ENCODE measurements at regions of chr7 and their contacts with region 1.

Region 1: GRCh38 chr7:44847508-44847920 is 373 bp downstream of the H2AZ2 start:
- DNase-seq: peak; percentile 82
- ATAC-seq: peak; percentile 78
- H3K4me3 ChIP-seq: peak overlapping the region; percentile 90
- H3K27ac ChIP-seq: peak overlapping the region; percentile 81
- H3K4me1 ChIP-seq: peaks cover 2% of the 10 kb centered on the region; the same call in 1 of the 2 replicates
- H3K27me3 ChIP-seq: no peaks in the 10 kb centered on the region
- CTCF ChIP-seq: peak; percentile 87
- POLR2A ChIP-seq: no peak
- RAD21 ChIP-seq: peak; percentile 82

Region 2: GRCh38 chr7:44581879-44582603 is 265.5 kb before region 1 on chr7 and contains the start of gene TMED4:
- CTCF ChIA-PET with region 1: no interaction called
- POLR2A ChIA-PET with region 1: interaction called, 10 read pairs
- dilution Hi-C with region 1: no loop called
- in situ Hi-C with region 1: no loop called
- intact Hi-C with region 1: no loop called
- DNase-seq: peak; percentile 98
- ATAC-seq: peak; percentile 98
- H3K4me3 ChIP-seq: peak within 1 kb of the TSS; percentile 91
- H3K27ac ChIP-seq: peak within 1 kb of the TSS; percentile 90
- H3K4me1 ChIP-seq: peaks cover 8% of the 10 kb centered on the region
- H3K27me3 ChIP-seq: no peaks in the 10 kb centered on the region
- CTCF ChIP-seq: no peak
- POLR2A ChIP-seq: peak; percentile 73
- RAD21 ChIP-seq: no peak
- total RNA-seq, gene TMED4: 68.0 and 92.7 TPM in 2 replicates

Region 3: DNA sequence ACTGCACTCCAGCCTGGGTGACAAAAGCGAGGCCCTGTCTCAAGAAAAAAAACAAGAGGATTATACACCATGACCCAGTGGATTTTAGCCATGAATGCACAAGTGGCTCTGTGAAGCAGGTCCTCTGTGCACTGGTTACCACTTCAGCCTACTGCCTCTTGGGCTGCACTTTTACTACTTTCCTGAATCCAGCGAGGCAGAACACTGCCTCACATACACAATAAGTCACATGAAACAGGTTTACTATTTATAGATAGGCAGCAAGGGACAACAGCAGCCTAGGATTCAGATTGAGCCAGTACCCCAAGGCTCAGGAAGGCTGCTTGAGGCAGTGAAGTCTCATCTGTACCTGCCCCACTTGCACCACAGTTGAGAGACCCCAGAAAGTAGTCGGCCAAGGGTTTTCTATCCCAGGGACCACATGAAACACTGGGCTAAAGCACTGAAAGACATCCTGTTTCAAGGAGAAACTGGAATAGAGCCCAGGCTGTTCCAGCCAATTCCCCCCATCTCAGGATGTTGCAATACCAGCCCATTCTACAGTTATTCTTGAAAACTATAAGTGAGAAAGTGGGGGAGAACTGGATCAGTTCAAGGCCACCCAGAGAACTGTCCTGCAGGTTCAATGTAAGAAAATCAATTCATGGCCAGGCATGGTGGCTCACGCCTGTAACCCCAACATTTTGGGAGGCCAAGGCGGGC is 251.4 kb before region 1 on chr7:
- CTCF ChIA-PET with region 1: interaction called, 4 read pairs
- POLR2A ChIA-PET with region 1: no interaction called
- dilution Hi-C with region 1: no loop called
- in situ Hi-C with region 1: loop called (anchors 10 kb)
- intact Hi-C with region 1: no loop called
- DNase-seq: peak; percentile 16
- ATAC-seq: no peak
- H3K4me3 ChIP-seq: no peak overlapping the region
- H3K27ac ChIP-seq: no peak overlapping the region
- H3K4me1 ChIP-seq: 0 out of 2 replicates have a peak, but pooled peaks cover 2% of the 10 kb centered on the region
- H3K27me3 ChIP-seq: peaks cover 1% of the 10 kb centered on the region
- CTCF ChIP-seq: no peak
- POLR2A ChIP-seq: no peak
- RAD21 ChIP-seq: no peak

Region 4: GRCh38 chr7:44748045-44748947 is 99.2 kb before region 1 on chr7 and contains the start of gene ZMIZ2:
- CTCF ChIA-PET with region 1: no interaction called
- POLR2A ChIA-PET with region 1: no interaction called
- dilution Hi-C with region 1: no loop called
- in situ Hi-C with region 1: no loop called
- intact Hi-C with region 1: loop called (anchors 1 kb)
- DNase-seq: peak; percentile 76
- ATAC-seq: peak; percentile 98
- H3K4me3 ChIP-seq: peak within 1 kb of the TSS; percentile 99
- H3K27ac ChIP-seq: peak within 1 kb of the TSS; percentile 100
- H3K4me1 ChIP-seq: peaks cover 20% of the 10 kb centered on the region
- H3K27me3 ChIP-seq: no peaks in the 10 kb centered on the region
- CTCF ChIP-seq: no peak
- POLR2A ChIP-seq: peak; percentile 82
- RAD21 ChIP-seq: peak; percentile 20; the same call in 1 of the 2 replicates
- total RNA-seq, gene ZMIZ2: 2.8 and 3.0 TPM in 2 replicates

Region 5: DNA sequence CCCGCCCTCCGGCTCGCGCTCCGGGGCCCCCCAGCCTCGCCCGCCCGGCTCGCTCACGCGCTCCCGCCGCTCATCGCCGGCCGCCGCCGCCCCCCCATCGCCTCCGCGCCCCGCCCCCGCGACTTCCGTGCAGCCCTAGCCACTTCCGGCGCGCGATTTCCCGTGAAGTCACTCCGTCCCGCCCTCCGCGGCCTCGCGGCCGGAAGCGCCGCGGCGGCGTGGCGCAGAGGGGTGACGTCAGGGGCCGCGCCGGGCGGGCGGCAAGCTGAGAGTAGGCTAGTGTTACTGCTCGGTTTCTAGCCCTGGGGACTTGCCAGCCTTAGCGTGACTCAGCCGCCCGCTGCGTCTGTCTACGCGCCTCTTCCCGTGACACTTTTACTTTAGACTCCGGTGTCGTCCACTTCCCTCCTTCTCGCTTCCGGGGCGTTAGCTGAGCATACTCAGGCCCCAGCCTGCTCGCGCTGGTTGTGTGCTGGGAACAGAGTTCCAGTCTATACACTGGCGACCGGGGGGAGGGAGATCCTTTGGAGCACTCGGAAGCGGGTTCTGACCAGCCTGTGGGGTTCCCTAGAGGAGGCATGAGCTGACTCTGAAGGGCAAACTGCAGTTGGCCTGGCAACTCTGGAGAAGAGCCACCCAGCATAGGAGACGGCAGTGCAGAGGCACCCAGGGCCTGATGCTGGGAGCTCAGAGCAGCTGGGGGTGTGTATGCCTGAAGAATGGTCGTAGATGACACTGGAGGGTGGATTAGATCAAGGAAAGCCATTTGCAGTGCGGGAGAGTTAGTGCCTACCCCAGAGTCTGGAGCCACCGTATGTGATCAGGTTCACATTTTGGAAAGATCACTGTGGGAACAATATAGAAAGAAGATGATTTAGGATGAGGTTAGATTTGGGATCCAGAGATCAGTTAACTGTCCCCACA is 38.1 kb after region 1 on chr7 and contains the start of gene PURB:
- CTCF ChIA-PET with region 1: no interaction called
- POLR2A ChIA-PET with region 1: no interaction called
- dilution Hi-C with region 1: no loop called
- in situ Hi-C with region 1: no loop called
- intact Hi-C with region 1: loop called (anchors 2 kb)
- DNase-seq: peak; percentile 98
- ATAC-seq: peak; percentile 85
- H3K4me3 ChIP-seq: peak within 1 kb of the TSS; percentile 94
- H3K27ac ChIP-seq: peak within 1 kb of the TSS; percentile 91
- H3K4me1 ChIP-seq: peaks cover 7% of the 10 kb centered on the region; the same call in 1 of the 2 replicates
- H3K27me3 ChIP-seq: no peaks in the 10 kb centered on the region
- CTCF ChIP-seq: no peak
- POLR2A ChIP-seq: peak; percentile 90
- RAD21 ChIP-seq: no peak
- total RNA-seq, gene PURB: 8.8 and 15.3 TPM in 2 replicates

Region 6: GRCh38 chr7:45331563-45331962 is 484.0 kb after region 1 on chr7:
- CTCF ChIA-PET with region 1: no interaction called
- POLR2A ChIA-PET with region 1: no interaction called
- dilution Hi-C with region 1: no loop called
- in situ Hi-C with region 1: no loop called
- intact Hi-C with region 1: no loop called
- DNase-seq: no peak
- ATAC-seq: no peak
- H3K4me3 ChIP-seq: no peak overlapping the region
- H3K27ac ChIP-seq: no peak overlapping the region
- H3K4me1 ChIP-seq: no peaks in the 10 kb centered on the region
- H3K27me3 ChIP-seq: no peaks in the 10 kb centered on the region
- CTCF ChIP-seq: no peak
- POLR2A ChIP-seq: no peak
- RAD21 ChIP-seq: no peak